ENCODE measurements at regions of chr6 and their contacts with region 1.

Region 1: DNA sequence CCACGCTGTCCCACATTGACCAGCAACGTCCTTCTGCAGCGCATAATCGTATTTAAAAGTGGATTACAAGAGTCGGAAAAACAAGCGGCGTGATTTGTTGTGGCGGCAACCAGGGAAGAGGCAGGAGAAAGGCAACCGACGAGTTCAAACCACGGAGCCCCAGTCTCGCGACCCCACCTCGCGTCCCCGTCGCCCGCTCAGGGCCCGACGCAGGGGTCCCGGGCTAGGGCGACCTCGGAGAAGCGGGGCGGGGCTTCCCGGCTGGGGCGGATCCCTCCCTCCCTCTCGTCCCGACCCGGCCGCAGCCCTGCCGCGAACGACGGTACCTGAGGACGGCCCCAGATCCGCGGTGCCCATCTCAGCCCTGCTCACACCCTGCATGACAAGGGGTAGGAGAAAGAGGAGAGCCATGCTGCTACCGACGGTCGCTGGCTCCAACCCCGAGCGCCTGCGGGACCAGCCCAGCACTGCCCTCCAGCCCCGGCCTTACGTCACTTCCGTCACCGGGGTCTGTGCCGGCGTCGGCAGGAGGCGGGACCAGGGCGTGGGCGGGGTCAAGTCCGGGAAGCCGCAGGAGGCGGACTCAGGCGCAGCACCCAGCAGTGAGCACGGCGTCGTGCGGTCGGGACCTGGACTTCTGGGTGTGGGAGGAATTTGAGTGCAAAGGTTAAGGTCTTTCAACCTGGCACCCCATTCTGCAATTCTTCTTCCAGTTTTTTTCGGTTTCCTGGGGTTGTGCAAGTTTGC is at the start of gene IFNGR1:
- DNase-seq: peak; percentile 97
- ATAC-seq: peak; percentile 85
- H3K4me3 Mint-ChIP-seq: peak within 1 kb of the TSS; percentile 99
- H3K27ac Mint-ChIP-seq: peak within 1 kb of the TSS; percentile 98
- H3K4me1 Mint-ChIP-seq: peaks cover 83% of the 10 kb centered on the region
- H3K27me3 Mint-ChIP-seq: no peaks in the 10 kb centered on the region
- CTCF ChIP-seq: no peak
- total RNA-seq, gene IFNGR1: 60.5 and 65.6 TPM in 2 replicates

Region 2: DNA sequence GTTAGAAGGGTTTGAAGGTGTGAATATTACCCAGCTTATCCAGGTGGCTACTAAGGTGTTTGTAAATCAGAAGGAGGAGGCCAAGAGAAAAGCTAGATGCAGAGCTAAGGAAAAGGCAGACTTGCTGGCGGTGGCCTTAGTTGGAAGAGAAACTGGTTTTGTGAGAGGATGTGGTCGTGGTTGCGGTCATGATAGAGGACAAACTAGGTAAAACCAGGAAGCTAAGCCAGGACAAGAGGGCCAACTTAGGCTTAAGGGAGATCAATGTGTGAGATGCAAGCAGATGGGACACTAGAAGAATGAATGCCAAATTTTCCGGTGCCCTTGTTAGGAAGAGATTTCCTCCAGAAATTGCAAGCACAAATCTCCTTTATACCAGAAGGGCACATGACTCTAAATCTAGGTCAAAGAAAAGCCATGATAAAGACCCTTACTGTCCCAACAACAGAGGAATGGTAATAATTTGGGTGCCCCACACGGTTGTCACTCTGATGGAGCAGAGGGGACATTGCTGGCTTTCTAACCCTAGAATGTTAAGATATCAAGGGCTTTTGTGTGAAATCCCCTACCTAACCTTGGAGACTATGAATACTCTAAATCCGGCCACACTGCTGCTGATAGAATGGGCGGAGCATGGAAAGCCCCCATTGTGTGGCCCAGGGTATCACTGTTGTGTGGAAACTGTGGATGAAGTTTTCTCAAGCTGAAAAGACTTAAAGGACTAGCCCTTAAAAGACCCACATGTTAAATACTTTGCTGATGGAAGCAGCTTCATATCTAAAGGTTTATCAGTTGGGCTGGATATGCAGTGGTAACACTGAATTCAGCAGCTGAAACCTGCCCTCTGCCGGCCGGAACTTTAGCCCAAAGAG is 53.5 kb before region 1 on chr6:
- CTCF ChIA-PET with region 1: interaction called, 7 read pairs
- POLR2A ChIA-PET with region 1: interaction called, 5 read pairs
- intact Hi-C with region 1: loop called (anchors 5 kb)
- DNase-seq: peak; percentile 28
- ATAC-seq: peak; percentile 81
- H3K4me3 Mint-ChIP-seq: peak overlapping the region; percentile 45
- H3K27ac Mint-ChIP-seq: peak overlapping the region; percentile 92
- H3K4me1 Mint-ChIP-seq: peaks cover 75% of the 10 kb centered on the region
- H3K27me3 Mint-ChIP-seq: no peaks in the 10 kb centered on the region
- CTCF ChIP-seq: no peak

Region 3: GRCh38 chr6:137233911-137234863 is 15.1 kb after region 1 on chr6:
- CTCF ChIA-PET with region 1: interaction called, 3 read pairs
- POLR2A ChIA-PET with region 1: interaction called, 29 read pairs
- intact Hi-C with region 1: loop called (anchors 1 kb)
- DNase-seq: no peak
- ATAC-seq: peak; percentile 76
- H3K4me3 Mint-ChIP-seq: peak overlapping the region; percentile 73
- H3K27ac Mint-ChIP-seq: peak overlapping the region; percentile 80
- H3K4me1 Mint-ChIP-seq: peaks cover 70% of the 10 kb centered on the region
- H3K27me3 Mint-ChIP-seq: no peaks in the 10 kb centered on the region
- CTCF ChIP-seq: no peak

Region 4: GRCh38 chr6:137271245-137272183 is 52.4 kb after region 1 on chr6:
- CTCF ChIA-PET with region 1: interaction called, 5 read pairs
- POLR2A ChIA-PET with region 1: no interaction called
- intact Hi-C with region 1: loop called (anchors 1 kb)
- DNase-seq: no peak
- ATAC-seq: peak; percentile 75
- H3K4me3 Mint-ChIP-seq: no peak overlapping the region
- H3K27ac Mint-ChIP-seq: no peak overlapping the region
- H3K4me1 Mint-ChIP-seq: peaks cover 20% of the 10 kb centered on the region
- H3K27me3 Mint-ChIP-seq: no peaks in the 10 kb centered on the region
- CTCF ChIP-seq: peak; percentile 61

Region 5: GRCh38 chr6:137432054-137432611 is 213.0 kb after region 1 on chr6:
- CTCF ChIA-PET with region 1: no interaction called
- POLR2A ChIA-PET with region 1: no interaction called
- intact Hi-C with region 1: loop called (anchors 2 kb)
- DNase-seq: no peak
- ATAC-seq: peak; percentile 65
- H3K4me3 Mint-ChIP-seq: peak overlapping the region; percentile 81
- H3K27ac Mint-ChIP-seq: peak overlapping the region; percentile 26
- H3K4me1 Mint-ChIP-seq: peaks cover 40% of the 10 kb centered on the region
- H3K27me3 Mint-ChIP-seq: no peaks in the 10 kb centered on the region
- CTCF ChIP-seq: no peak